Posterior cingulate gyrus (tissue), 11 donors: ENCODE measurements at regions of chr1 and their contacts with region 1.

Region 1: DNA sequence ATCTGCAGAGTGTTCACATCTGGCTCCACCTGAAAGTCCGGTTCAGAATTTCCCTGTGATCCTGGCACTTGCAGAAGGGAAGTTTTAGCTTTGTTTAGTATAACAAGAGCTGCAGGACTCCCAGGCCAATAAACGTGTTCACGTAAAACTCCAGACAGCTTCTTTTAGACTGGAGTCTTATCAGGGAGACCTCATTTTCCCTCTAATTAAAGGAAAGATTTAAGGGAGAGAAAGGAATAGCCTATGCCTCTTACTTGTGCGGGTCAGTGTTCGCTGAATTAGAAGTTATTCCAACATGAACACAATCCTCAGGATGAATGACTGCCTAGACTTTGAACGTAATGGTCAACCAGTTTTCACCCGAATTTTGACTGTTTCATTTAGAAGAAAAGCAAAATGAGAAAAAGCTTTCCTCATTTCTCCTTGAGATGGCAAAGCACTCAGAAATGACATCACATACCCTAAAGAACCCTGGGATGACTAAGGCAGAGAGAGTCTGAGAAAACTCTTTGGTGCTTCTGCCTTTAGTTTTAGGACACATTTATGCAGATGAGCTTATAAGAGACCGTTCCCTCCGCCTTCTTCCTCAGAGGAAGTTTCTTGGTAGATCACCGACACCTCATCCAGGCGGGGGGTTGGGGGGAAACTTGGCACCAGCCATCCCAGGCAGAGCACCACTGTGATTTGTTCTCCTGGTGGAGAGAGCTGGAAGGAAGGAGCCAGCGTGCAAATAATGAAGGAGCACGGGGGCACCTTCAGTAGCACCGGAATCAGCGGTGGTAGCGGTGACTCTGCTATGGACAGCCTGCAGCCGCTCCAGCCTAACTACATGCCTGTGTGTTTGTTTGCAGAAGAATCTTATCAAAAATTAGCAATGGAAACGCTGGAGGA is 202.1 kb upstream of the SGIP1 start:
- DNase-seq: peak in 6 of 10 donors; percentile 20 to 87 (median 30)

Region 2: GRCh38 chr1:66271216-66271903 is 60.5 kb before region 1 on chr1:
- intact Hi-C with region 1: loop called (anchors 10 kb)
- DNase-seq: peak in 7 of 10 donors; percentile 11 to 85 (median 36)

Region 3: DNA sequence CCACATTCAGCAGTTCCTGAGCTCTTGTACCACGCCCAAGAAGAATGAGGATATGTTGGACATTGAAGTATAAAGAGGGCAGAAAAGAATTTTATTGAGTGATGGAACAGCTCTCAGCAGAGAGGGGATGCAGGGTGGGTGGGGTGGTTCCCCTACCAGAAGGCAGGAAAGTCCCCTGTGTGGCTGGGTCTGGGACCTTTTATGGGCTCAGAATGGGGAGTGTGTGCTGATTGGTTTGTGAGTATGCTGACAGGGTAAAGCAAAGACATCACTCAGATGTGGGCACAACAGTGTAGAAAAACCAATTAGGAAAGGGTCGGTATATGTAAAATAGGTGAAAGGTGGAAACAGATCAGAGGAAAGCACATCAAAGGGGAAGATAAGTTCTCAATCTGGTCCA is 264.3 kb after region 1 on chr1:
- intact Hi-C with region 1: no loop called
- DNase-seq: no peak

Region 4: DNA sequence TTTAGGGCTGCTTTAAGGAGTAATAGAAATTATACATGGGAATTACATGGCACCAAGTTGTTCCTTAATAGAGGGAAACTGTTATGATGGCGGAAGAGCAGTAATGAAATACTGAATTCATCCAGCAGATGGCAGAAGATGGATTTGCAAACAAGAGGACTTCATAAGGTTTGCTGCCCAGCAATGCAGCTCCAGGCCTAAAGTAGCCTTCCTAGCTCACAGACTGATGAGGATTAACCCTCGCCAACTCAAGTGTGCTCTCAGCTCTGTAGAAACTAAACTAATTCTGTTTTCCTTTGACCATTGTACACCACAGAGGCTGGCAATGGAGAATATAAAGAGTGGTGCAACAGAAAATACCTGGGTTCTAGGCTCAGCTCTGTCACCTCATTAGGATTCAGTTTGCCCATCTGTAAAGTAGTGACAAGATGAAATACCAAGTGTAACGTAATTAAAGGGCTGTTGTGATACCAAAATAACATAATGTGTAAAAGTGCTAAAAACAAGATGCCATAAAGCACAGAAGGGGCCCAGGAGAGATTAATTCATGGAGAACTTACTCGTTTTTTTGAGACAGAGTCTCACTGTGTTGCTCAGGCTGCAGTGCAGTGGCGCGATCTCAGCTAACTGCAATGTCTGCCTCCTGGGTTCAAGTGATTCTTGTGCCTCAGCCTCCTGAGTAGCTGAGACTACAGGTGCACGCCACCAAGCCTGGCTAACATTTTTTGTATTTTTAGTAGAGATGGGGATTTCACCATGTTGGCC is 1200.7 kb after region 1 on chr1:
- intact Hi-C with region 1: no loop called
- DNase-seq: peak in 5 of 10 donors; percentile 7 to 83 (median 28)